ENCODE measurements at regions of chr11 and their contacts with region 1.

Region 1: GRCh38 chr11:102940714-102941588 is 14.6 kb downstream of the MMP13 start:
- DNase-seq: peak; percentile 65
- CTCF ChIP-seq: peak; percentile 72

Region 2: DNA sequence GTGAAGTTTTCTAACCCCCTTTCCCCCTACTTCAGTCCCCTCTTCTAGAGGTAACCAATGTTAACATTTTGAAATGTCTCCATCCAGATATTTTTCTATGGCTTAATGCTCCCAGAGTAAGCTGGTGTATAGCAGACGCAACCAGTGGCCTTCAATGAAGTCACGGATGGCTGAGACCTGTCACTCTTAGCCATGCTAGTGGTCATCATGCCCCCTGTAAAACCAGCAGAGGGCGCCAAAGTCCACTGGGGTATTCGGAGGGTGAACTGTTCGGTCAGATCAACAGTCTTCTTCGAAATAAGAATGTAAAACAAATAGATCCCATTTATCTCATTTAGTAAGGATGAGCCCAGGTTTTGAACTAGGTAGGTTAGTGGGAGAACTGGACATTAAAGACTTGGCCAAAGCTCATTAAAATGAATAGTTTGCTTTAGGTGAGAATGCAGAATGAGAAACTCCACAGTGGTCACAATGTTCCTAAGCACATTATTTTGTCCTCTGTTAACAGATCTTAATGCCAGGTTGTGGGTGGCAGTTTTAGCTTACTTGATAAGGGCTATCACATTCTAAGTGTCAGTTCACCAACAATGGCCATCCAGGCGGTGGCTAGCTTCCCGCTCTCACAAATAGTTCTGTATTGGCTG is 207.6 kb before region 1 on chr11:
- CTCF ChIA-PET with region 1: interaction called, 15 read pairs
- POLR2A ChIA-PET with region 1: no interaction called
- DNase-seq: peak; percentile 59
- CTCF ChIP-seq: peak; percentile 63

Region 3: GRCh38 chr11:102914238-102915043 is 26.5 kb before region 1 on chr11:
- CTCF ChIA-PET with region 1: interaction called, 30 read pairs
- POLR2A ChIA-PET with region 1: no interaction called
- DNase-seq: no peak
- CTCF ChIP-seq: peak; percentile 52

Region 4: GRCh38 chr11:102920118-102920684 is 20.8 kb before region 1 on chr11:
- CTCF ChIA-PET with region 1: interaction called, 30 read pairs
- POLR2A ChIA-PET with region 1: no interaction called
- DNase-seq: peak; percentile 22
- CTCF ChIP-seq: no peak

Region 5: DNA sequence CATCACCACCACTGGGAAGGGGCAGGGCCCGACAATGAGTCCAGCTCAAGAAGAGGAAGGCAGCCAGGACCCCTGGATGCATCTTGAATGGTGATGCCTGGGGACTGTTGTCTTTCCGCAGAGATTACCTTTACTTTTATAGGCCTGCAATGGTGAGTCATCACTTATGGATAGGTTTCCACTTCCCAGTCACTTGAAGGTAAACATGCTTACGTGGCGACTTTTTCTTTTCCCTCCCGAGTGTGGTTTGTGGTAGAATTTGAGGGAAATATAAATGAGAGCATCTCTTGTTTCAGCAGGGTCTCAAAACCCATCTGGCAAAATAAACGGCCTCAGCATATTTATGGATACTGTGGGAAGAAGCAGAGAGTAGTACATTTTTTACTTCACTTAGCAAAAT is 14.7 kb after region 1 on chr11 and contains the start of gene MMP13:
- CTCF ChIA-PET with region 1: interaction called, 11 read pairs
- POLR2A ChIA-PET with region 1: no interaction called
- DNase-seq: no peak
- CTCF ChIP-seq: no peak

Region 6: GRCh38 chr11:103091801-103092524 is 151.0 kb after region 1 on chr11 and contains the start of gene DCUN1D5:
- CTCF ChIA-PET with region 1: no interaction called
- POLR2A ChIA-PET with region 1: no interaction called
- DNase-seq: peak; percentile 96
- CTCF ChIP-seq: no peak

Region 7: DNA sequence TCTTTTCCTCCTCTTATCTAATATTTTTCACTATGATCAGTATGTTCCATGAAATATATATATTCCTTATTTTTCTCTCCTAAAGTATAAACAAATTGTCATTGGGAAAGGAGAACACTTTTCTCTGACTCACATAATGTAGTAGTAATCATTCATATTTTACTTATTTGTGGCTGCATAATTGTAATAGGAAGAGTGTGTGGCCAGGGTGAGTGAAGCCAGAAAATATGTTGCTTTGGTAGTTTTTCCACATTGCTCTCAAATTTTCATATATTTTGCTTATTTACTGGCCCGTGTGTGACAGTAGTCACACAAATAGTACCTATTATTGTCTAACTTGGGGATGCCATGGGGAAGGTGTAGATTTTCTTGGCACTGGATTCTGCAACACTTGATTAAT is 340.4 kb after region 1 on chr11:
- CTCF ChIA-PET with region 1: no interaction called
- POLR2A ChIA-PET with region 1: no interaction called
- DNase-seq: no peak
- CTCF ChIP-seq: no peak